CD14-positive monocyte (primary cell): ENCODE measurements at regions of chr10 and their contacts with region 1.

Region 1: DNA sequence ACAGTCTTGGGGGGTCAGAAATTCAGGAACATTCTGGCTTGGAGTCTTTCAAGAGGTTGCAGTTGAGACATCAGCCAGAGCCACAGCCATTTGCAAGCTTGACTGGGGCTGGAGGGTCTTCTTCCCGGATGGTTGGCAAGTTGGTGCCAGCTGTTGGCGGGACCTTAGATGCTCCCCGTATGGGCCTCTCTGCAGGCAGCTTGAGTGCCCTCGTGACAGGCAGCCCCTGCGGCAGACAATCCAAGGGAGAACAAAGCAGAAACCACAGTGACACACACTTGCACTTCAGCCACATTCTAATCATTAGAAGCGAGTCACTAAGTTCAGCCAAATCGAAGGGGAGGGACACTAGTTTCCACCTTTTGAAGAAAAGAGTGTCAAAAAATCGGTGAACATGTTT is 59.4 kb upstream of the MXI1 start:
- DNase-seq: no peak
- H3K4me3 ChIP-seq: no peak overlapping the region
- H3K4me3 Mint-ChIP-seq: peak overlapping the region in 1 of 2 donors; percentile 5
- H3K27ac ChIP-seq: no peak overlapping the region
- H3K27ac Mint-ChIP-seq: peak overlapping the region in 3 of 7 donors; percentile 17 to 77 (median 54)
- H3K4me1 ChIP-seq: peaks cover 26 to 30% of the 10 kb centered on the region in 2 donors
- H3K4me1 Mint-ChIP-seq: peaks cover 38% of the 10 kb centered on the region
- H3K27me3 ChIP-seq: peaks cover 0 to 3% of the 10 kb centered on the region in 2 donors
- H3K27me3 Mint-ChIP-seq: peaks cover 11 to 21% (median 15%) of the 10 kb centered on the region in 3 donors
- CTCF ChIP-seq: no peak

Region 2: GRCh38 chr10:110556969-110557601 is 409.1 kb after region 1 on chr10:
- intact Hi-C with region 1: loop called in 1 of 2 experiments (anchors 5 kb)
- DNase-seq: peak; percentile 27 to 61 (median 50)
- H3K4me3 ChIP-seq: no peak overlapping the region
- H3K4me3 Mint-ChIP-seq: no peak overlapping the region
- H3K27ac ChIP-seq: no peak overlapping the region
- H3K27ac Mint-ChIP-seq: no peak overlapping the region
- H3K4me1 ChIP-seq: no peaks in the 10 kb centered on the region
- H3K4me1 Mint-ChIP-seq: peaks cover 7% of the 10 kb centered on the region
- H3K27me3 ChIP-seq: no peaks in the 10 kb centered on the region
- H3K27me3 Mint-ChIP-seq: peaks cover 1 to 3% (median 3%) of the 10 kb centered on the region in 3 donors
- CTCF ChIP-seq: peak; percentile 34